ENCODE measurements at regions of chr3 and their contacts with region 1.

Region 1: DNA sequence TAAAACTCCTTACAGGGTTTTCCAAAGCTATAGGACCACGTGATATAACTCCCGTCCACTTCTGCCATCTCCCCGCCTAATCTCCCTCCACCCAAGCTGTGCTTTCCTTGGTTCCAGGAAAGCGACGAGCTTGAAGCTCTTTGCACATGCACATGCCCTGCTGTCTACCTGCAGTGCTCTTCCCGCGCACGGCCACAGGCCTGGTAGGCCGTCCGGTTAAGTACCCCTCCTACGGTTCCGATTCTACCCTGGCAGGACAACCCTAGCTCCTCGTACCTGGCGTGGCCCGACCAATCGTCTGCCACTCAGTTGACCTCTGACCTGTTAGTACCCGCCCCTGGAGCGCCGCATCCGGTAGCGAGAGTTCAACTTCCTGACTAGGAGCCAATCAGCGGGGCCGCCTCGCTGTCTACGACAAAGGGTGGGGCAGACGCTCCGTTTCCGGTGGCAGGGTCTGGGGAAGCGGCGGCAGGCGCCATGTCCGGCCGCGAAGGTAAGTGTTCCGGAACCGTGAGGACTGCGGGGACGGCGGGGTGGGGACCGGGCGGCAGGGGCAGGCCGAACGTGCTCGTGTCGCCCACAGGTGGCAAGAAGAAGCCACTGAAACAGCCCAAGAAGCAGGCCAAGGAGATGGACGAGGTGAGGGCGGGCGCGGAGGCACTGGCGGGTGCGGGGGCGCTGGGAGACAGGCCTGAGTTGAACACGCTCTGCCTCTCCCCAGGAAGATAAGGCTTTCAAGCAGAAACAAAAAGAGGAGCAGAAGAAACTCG is at the starts of genes CCDC51 and TMA7:
- DNase-seq: peak; percentile 99
- ATAC-seq: peak; percentile 97
- H3K4me3 Mint-ChIP-seq: peak within 1 kb of the TSS; percentile 92
- H3K27ac Mint-ChIP-seq: peak within 1 kb of the TSS; percentile 98
- H3K4me1 Mint-ChIP-seq: peaks cover 29% of the 10 kb centered on the region
- H3K27me3 Mint-ChIP-seq: no peaks in the 10 kb centered on the region
- total RNA-seq, gene CCDC51: 17.5 to 25.0 TPM
- total RNA-seq, gene TMA7: 260 to 324 TPM

Region 2: GRCh38 chr3:48232734-48233133 is 207.3 kb before region 1 on chr3:
- CTCF ChIA-PET with region 1: interaction called, 56 read pairs
- POLR2A ChIA-PET with region 1: no interaction called
- intact Hi-C with region 1: loop called (anchors 1 kb)
- DNase-seq: peak; percentile 81
- ATAC-seq: peak; percentile 98
- H3K4me3 Mint-ChIP-seq: no peak overlapping the region
- H3K27ac Mint-ChIP-seq: no peak overlapping the region
- H3K4me1 Mint-ChIP-seq: peaks cover 6% of the 10 kb centered on the region
- H3K27me3 Mint-ChIP-seq: peaks cover 2% of the 10 kb centered on the region

Region 3: DNA sequence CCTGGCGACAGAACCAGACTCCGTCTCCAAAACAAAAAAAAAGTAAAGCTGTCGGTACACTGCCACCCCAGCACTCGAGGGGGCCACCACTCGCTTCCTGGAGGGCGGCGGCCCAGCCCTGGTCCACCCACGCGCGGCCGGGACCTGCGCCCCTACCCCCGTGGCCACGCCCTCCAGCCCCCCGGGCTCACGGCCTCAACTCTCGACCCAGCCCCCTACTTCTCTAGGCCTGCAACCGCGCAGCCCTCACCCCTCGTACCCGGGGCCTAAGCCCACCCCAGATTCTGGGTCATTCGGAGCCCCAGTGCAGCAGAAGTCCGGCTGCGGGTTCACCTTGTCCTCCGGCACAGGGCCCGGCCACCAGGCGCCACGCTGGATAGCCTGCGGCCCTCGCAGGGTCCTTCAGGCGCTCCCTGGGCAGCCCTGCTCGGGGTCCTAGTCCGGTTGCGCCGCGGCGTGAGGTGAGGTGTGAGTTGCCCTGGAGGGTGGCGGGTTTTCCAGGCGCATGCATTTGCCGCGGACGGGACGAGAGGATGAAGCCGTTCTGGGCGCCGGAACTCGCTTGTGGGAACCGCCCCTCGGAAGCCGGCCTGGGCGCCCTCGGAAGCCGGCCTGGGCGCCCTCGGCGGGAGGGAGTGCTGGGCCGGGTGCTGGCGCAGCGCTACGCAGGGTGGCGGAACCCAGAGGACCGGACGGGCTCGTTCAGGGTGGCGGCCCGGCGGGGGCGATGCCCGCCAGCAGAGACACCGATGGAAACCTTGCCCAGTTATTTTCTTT is 138.8 kb before region 1 on chr3:
- CTCF ChIA-PET with region 1: interaction called, 15 read pairs
- POLR2A ChIA-PET with region 1: interaction called, 3 read pairs
- intact Hi-C with region 1: loop called in 1 of 2 experiments (anchors 1 kb)
- DNase-seq: peak; percentile 97
- ATAC-seq: peak; percentile 85
- H3K4me3 Mint-ChIP-seq: peak within 1 kb of the TSS; percentile 92
- H3K27ac Mint-ChIP-seq: peak within 1 kb of the TSS; percentile 98
- H3K4me1 Mint-ChIP-seq: peaks cover 27% of the 10 kb centered on the region
- H3K27me3 Mint-ChIP-seq: no peaks in the 10 kb centered on the region

Region 4: DNA sequence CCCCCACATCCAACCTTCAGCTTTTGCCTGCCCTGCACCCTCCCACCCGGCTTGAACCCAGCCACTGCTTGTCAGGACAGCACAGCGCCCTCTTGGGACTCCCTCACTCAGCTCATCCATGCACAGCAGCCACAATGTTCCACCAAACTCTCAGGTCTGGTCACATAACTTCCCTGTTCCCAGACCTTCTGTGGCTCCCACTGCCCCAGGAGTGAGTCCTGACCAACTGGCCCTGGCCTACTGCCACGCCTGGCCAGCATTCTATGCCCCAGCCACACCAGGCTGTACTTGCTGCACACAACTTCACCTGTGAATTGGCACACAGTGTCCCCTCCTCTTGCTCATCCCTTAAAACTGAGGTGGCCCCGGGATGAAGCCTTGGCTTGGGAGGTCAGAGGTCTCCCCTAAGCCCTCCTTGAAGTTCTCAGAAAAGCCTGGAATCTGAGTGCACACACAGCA is 31.2 kb before region 1 on chr3:
- CTCF ChIA-PET with region 1: interaction called, 45 read pairs
- POLR2A ChIA-PET with region 1: no interaction called
- intact Hi-C with region 1: no loop called
- DNase-seq: peak; percentile 36
- ATAC-seq: peak; percentile 19
- H3K4me3 Mint-ChIP-seq: no peak overlapping the region
- H3K27ac Mint-ChIP-seq: no peak overlapping the region
- H3K4me1 Mint-ChIP-seq: no peaks in the 10 kb centered on the region
- H3K27me3 Mint-ChIP-seq: no peaks in the 10 kb centered on the region

Region 5: GRCh38 chr3:48465531-48466378 is 25.8 kb after region 1 on chr3:
- CTCF ChIA-PET with region 1: interaction called, 8 read pairs
- POLR2A ChIA-PET with region 1: no interaction called
- intact Hi-C with region 1: loop called in 1 of 2 experiments (anchors 1 kb)
- DNase-seq: peak; percentile 90
- ATAC-seq: peak; percentile 92
- H3K4me3 Mint-ChIP-seq: peak overlapping the region; percentile 93
- H3K27ac Mint-ChIP-seq: peak overlapping the region; percentile 96
- H3K4me1 Mint-ChIP-seq: peaks cover 46% of the 10 kb centered on the region
- H3K27me3 Mint-ChIP-seq: no peaks in the 10 kb centered on the region

Region 6: DNA sequence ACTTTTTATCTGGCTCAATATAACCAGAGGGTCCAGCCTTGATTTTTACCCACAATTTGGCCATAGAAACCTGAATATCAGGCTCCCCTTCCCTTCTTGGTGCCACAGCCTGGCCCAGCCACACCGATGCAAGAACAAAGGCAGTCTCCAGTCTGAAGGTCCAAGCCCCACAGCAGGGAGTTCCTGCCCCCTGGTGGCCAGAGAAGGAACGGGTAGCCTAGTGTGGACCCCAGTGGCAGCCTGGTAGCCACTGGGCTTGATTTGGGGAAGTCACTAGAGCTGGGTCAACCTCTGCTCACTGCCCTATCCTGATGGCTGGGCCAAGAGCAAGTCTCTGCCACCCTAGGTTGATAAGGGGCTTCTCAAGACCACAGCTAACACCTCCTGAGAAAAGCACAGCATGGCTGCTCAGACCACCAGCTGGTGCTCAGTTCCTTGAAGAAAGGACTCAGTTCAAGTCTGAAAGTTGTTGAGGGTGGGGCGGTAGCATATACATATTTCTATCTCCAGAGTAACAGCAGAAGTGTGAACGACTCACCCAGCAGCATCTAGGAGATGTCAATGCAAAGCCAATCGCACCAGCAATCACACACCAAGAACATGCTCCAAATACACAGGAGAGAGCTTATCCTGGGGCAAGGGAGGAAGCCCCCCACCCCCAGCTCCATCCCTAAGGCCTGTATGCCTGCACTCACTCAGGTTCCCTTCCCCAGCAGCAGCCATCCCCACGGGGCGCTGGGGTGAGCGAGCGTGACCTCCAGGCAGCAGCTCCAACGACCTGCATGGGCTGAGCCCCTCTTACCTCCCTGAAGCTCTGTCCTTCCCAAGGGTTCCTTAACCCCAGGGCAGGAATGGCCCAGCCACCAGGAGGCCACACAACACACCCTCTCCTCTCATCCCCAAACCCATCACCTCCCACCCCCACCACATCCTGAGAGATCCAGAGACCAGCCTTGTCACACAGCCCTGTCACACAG is 109.0 kb after region 1 on chr3:
- CTCF ChIA-PET with region 1: interaction called, 29 read pairs
- POLR2A ChIA-PET with region 1: no interaction called
- intact Hi-C with region 1: no loop called
- DNase-seq: peak; percentile 89
- ATAC-seq: peak; percentile 96
- H3K4me3 Mint-ChIP-seq: no peak overlapping the region
- H3K27ac Mint-ChIP-seq: no peak overlapping the region
- H3K4me1 Mint-ChIP-seq: peaks cover 9% of the 10 kb centered on the region
- H3K27me3 Mint-ChIP-seq: no peaks in the 10 kb centered on the region

Region 7: DNA sequence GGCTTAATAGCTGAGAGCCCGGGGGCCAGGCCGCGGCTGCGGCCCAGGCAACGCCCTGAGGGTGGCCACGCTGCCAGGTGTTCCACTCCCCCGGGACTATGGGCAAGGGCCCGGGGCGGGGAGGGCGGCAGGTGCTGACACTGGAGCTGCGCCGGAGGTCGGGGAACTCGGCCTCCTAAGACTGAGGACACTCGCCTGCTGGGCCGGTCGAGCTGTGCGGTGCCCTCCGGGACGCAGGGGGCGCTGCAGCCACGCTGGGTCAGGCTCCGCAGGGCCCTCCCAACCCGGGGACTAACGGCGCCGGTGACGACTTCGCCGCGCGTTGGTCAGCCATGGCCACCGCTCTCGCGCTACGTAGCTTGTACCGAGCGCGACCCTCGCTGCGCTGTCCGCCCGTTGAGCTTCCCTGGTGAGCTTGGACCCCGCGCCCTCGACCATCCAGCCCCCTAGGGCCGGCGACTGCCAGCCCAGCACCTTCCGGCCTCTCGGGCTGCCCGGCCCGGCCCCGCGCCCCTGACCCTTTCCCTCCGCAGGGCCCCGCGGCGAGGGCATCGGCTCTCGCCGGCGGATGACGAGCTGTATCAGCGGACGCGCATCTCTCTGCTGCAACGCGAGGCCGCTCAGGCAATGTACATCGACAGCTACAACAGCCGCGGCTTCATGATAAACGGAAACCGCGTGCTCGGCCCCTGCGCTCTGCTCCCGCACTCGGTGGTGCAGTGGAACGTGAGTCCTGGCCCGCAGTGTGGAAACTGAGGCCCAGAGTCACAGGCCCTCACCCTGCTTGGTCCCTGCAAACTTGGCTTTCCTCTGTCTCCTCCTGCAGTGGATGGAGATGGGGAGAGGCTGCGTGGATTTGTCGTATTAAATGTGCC is 582.0 kb after region 1 on chr3 and contains the start of gene NDUFAF3:
- CTCF ChIA-PET with region 1: no interaction called
- POLR2A ChIA-PET with region 1: no interaction called
- intact Hi-C with region 1: loop called in 1 of 2 experiments (anchors 2 kb)
- DNase-seq: peak; percentile 96
- ATAC-seq: peak; percentile 78
- H3K4me3 Mint-ChIP-seq: peak within 1 kb of the TSS; percentile 95
- H3K27ac Mint-ChIP-seq: peak within 1 kb of the TSS; percentile 96
- H3K4me1 Mint-ChIP-seq: peaks cover 60% of the 10 kb centered on the region
- H3K27me3 Mint-ChIP-seq: no peaks in the 10 kb centered on the region
- total RNA-seq, gene NDUFAF3: 90.8 to 108 TPM